ENCODE measurements at regions of chr5 and their contacts with region 1.

Region 1: GRCh38 chr5:35926389-35927051 is 11.9 kb downstream of the CAPSL start:
- DNase-seq: no peak
- H3K4me3 ChIP-seq: peak overlapping the region; percentile 28
- CTCF ChIP-seq: peak; percentile 74

Region 2: GRCh38 chr5:35617435-35618303 is 308.9 kb before region 1 on chr5 and contains the start of gene SPEF2:
- CTCF ChIA-PET with region 1: interaction called, 86 read pairs
- POLR2A ChIA-PET with region 1: no interaction called
- DNase-seq: peak; percentile 55
- H3K4me3 ChIP-seq: peak within 1 kb of the TSS; percentile 88
- CTCF ChIP-seq: peak; percentile 93

Region 3: GRCh38 chr5:35640623-35641022 is 285.9 kb before region 1 on chr5:
- CTCF ChIA-PET with region 1: interaction called, 15 read pairs
- POLR2A ChIA-PET with region 1: no interaction called
- DNase-seq: no peak
- H3K4me3 ChIP-seq: no peak overlapping the region
- CTCF ChIP-seq: no peak

Region 4: GRCh38 chr5:35657877-35658276 is 268.6 kb before region 1 on chr5:
- CTCF ChIA-PET with region 1: interaction called, 386 read pairs
- POLR2A ChIA-PET with region 1: no interaction called
- DNase-seq: no peak
- H3K4me3 ChIP-seq: no peak overlapping the region
- CTCF ChIP-seq: no peak

Region 5: DNA sequence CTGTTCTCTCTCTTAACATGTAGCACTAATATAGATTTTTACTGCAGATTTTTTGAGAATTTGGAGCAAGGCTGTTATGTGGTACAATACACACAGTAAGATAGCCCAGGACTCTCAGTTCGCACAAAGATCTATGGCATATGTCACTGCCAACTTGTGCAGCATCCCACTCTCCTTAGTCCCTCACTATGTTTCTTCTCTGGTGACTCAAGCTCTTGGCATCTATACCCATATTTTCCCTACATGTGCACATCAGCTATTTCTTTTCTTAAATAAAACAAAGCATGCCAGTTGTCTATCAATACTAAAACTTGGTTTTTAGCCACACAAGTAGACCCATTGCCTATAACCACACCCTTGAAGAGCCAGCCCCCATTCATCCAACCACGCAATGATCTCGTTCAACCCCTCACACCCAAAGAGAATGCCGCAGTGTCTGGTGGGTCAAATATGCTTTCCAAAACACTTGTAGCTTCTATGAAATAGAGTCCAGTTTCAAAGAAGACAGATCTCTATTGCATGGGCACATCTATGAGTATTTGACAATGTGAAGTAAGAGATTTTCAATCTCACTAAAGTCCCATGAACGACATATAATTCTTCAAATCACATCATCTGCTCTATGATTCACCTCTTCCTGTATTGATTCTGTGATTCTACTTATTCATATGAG is 88.0 kb before region 1 on chr5:
- CTCF ChIA-PET with region 1: no interaction called
- POLR2A ChIA-PET with region 1: no interaction called
- DNase-seq: no peak
- H3K4me3 ChIP-seq: no peak overlapping the region
- CTCF ChIP-seq: no peak

Region 6: GRCh38 chr5:35857606-35858205 is 68.8 kb before region 1 on chr5:
- CTCF ChIA-PET with region 1: interaction called, 22 read pairs
- POLR2A ChIA-PET with region 1: no interaction called
- DNase-seq: peak; percentile 80
- H3K4me3 ChIP-seq: peak overlapping the region; percentile 18
- CTCF ChIP-seq: no peak

Region 7: DNA sequence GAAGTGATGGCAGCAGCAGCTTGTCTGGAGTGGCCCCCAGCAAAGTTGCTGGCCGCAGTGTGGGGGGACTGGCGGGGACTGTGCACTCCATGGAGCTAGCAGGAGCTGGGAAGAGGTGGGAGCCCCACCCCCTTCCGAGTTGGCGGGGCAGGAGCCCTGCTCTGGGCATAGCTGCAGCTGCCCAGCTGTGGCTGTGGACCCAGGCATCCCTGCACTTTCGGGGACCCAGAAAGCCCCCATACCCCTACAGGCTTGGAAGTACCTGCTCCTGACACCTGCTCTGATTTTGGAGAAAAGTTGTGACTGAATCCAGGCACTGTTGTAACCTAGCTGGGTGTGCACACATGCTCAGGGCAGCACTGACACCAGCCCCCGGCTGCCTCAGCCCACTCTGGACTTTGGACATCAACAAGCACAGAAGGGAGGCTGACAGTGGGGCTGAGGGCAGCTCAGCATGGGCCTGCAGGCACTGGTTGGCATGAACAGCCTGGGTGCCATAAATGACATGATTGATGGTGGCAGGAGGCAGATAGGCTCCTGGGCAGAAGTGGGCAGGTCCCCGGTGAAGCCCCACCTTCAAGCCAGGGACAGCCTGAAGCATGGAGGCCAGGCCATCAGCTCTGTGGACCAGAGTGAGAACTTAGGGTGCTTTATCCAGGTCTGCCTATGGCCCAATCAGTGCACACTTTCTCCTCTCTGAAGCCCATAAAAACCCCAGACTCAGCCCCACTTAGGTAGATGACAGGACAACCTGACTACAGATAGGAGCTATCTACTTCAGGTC is 212.6 kb after region 1 on chr5:
- CTCF ChIA-PET with region 1: no interaction called
- POLR2A ChIA-PET with region 1: no interaction called
- DNase-seq: no peak
- H3K4me3 ChIP-seq: no peak overlapping the region
- CTCF ChIP-seq: no peak

Region 8: DNA sequence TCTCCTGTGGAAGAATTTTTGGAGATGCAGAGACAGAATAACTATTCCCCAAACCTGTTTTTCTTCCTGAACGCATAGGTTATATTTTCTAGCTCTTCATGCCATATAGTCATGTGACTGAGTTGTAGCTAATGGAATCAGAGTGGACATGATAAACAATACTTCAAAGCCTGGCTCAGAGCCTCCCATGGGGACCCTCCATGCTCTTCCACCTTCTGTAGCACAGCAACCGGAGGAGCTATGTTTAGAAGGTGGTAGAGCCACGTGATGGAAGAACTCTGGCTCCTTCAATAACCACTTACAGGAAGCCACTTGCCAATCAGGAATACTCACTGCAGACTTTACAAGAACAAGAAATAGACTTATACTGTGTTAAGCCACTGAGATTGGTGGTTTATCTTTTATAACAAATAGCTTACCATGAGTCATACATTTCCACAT is 276.0 kb after region 1 on chr5:
- CTCF ChIA-PET with region 1: no interaction called
- POLR2A ChIA-PET with region 1: no interaction called
- DNase-seq: no peak
- H3K4me3 ChIP-seq: no peak overlapping the region
- CTCF ChIP-seq: no peak

Measured in AG04449 (cell line).